ENCODE measurements at regions of chr12 and their contacts with region 1.

Region 1: DNA sequence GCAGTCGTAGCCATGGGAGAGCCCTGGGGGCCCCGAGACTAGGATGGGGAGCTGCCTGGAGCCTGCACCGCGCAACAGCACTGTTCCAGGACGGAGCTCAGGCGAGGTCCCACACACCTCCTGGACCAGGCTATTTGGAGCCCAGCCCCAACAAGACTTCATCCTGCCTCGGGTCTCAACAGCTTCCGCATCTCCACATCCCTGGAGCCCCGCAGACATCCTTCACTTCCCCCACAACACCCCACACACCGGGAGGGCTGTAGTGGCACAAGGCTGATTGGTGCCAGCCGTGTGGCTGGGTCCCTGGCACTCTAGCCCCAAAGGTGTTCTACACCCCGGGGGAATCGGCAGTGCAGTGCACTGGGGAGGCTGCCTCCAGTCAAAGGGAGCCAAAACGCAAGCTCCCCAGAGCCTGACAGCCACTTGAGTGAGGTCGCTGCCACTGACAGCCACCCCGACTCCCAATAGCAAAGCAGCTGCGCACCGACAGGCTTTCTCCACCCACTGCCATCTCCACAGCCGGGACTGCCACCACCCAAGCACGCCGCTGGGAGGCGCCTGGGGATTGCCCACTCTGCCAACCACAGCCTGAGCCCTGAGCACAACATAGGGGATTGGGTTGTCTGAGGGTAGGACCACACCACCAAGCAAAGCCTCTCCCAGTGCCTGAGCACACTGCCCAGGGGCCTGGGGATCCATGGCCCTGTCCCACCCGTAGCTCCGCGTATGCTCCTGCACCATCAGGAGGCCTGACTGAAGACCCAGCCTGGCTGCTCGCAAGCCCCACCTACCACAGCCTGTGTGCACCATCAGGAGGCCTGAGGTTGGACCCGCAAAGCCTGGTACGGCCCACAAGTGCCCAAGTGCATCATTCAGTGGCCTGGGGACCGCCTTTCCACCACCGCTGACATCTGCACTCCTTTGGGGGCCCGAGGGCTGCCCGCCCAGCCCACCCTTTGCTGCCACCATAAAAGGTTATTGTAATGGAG is 13.2 kb upstream of the KLRF1 start:
- DNase-seq: peak; percentile 95
- ATAC-seq: peak; percentile 98
- H3K4me3 Mint-ChIP-seq: peak overlapping the region; percentile 86
- H3K27ac Mint-ChIP-seq: peak overlapping the region; percentile 84
- H3K4me1 Mint-ChIP-seq: peaks cover 44% of the 10 kb centered on the region
- H3K27me3 Mint-ChIP-seq: peaks cover 4% of the 10 kb centered on the region

Region 2: GRCh38 chr12:9662500-9662899 is 151.6 kb before region 1 on chr12:
- CTCF ChIA-PET with region 1: no interaction called
- POLR2A ChIA-PET with region 1: no interaction called
- DNase-seq: peak; percentile 29
- ATAC-seq: peak; percentile 55
- H3K4me3 Mint-ChIP-seq: peak overlapping the region; percentile 7
- H3K27ac Mint-ChIP-seq: peak overlapping the region; percentile 82
- H3K4me1 Mint-ChIP-seq: peaks cover 85% of the 10 kb centered on the region
- H3K27me3 Mint-ChIP-seq: no peaks in the 10 kb centered on the region

Region 3: GRCh38 chr12:9760699-9761418 is 53.3 kb before region 1 on chr12 and contains the start of gene CD69:
- CTCF ChIA-PET with region 1: interaction called, 12 read pairs
- POLR2A ChIA-PET with region 1: interaction called, 14 read pairs
- DNase-seq: peak; percentile 92
- ATAC-seq: peak; percentile 60
- H3K4me3 Mint-ChIP-seq: peak within 1 kb of the TSS; percentile 92
- H3K27ac Mint-ChIP-seq: peak within 1 kb of the TSS; percentile 94
- H3K4me1 Mint-ChIP-seq: peaks cover 39% of the 10 kb centered on the region
- H3K27me3 Mint-ChIP-seq: no peaks in the 10 kb centered on the region
- total RNA-seq, gene CD69: 115 to 116 TPM

Region 4: DNA sequence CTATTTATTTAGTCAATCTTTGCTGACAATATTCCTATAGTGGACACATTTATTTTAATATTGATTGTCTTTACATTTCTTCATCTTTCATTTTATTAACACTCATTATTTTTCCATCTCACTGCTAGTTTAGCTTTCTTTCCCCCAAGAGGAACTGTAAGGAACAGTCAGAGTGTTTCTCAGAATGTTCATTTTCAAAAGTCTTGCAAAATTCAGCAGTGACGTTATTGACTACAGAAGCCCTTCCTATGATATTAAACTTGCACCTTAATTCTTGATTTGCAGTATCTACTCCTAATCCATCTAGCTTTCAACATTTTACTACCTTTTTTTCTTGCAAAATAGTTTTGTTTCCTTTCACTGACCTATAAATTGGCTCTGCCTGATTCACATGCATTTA is 42.0 kb after region 1 on chr12:
- CTCF ChIA-PET with region 1: interaction called, 11 read pairs
- POLR2A ChIA-PET with region 1: interaction called, 5 read pairs
- DNase-seq: no peak
- ATAC-seq: no peak
- H3K4me3 Mint-ChIP-seq: no peak overlapping the region
- H3K27ac Mint-ChIP-seq: no peak overlapping the region
- H3K4me1 Mint-ChIP-seq: peaks cover 32% of the 10 kb centered on the region
- H3K27me3 Mint-ChIP-seq: no peaks in the 10 kb centered on the region

Region 5: DNA sequence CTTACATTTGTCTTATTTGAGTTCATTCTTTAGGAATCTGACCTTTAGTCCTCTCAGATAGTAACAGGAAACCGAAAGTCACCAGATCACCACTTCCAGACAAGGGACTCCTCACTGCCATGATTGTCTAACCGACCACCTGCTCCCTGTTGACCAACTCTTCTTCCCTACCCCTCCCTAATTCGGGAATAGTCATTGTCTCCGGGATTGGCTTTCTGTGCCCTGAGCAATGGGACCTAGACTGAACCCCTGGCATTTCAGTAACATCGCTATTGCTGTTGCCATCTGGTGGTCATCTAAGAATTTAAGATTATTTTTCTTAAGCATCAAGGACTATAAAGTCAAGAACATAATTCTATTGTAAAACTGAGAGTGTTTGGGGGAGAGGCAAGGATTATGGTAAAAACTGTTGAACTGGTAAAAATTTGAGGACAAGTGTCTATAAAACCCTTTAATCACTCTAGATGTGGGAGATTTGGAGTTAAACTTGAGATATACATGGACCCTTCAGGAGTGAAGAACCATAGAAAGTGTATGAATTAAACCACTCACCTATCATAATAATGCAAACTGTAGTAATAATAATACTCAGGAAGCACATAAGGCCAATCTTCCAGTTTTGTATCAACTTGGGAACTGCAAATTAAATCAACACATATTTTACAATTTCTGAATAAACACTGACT is 111.7 kb after region 1 on chr12:
- CTCF ChIA-PET with region 1: interaction called, 41 read pairs
- POLR2A ChIA-PET with region 1: interaction called, 6 read pairs
- DNase-seq: peak; percentile 33
- ATAC-seq: peak; percentile 69
- H3K4me3 Mint-ChIP-seq: peak overlapping the region; percentile 60
- H3K27ac Mint-ChIP-seq: peak overlapping the region; percentile 77
- H3K4me1 Mint-ChIP-seq: peaks cover 37% of the 10 kb centered on the region
- H3K27me3 Mint-ChIP-seq: peaks cover 7% of the 10 kb centered on the region

Region 6: DNA sequence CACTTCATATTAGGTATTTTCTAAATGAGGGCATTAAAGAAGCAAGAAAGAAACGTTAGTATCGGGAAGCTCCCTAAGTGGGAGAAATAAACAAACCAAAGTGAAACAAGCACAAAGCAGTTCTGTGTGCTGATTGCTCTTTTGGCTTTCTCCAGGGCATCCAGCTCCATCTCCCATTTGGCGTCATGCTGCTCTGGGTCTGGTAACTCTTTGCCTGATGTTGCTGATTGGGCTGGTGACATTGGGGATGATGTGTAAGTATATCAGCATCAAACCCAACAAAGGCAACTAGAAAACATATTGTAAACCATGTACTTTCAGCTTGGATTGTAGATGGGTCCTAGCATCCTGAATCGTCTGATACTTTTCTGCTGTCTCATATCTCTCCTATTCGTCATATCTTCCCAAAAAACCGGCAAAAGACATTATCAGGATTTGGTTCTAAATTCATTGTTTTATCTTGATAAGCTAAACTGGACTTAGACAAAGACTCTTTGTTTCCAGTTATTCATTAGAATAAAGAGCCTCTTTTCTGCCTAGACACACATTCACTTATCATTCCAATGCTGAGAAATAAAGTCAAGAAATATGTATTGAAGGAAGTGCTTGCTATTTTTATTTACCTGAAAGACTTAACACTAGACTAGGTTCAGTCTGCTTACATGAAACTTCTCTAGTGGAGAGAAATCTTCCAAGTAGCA is 198.7 kb after region 1 on chr12:
- CTCF ChIA-PET with region 1: interaction called, 43 read pairs
- POLR2A ChIA-PET with region 1: interaction called, 3 read pairs
- DNase-seq: no peak
- ATAC-seq: no peak
- H3K4me3 Mint-ChIP-seq: no peak overlapping the region
- H3K27ac Mint-ChIP-seq: no peak overlapping the region
- H3K4me1 Mint-ChIP-seq: no peaks in the 10 kb centered on the region
- H3K27me3 Mint-ChIP-seq: peaks cover 36% of the 10 kb centered on the region

Measured in activated CD8-positive, alpha-beta T cell treated with anti-CD3 and anti-CD28 coated beads, Interleukin-2, amount 10 ng/mL, durations not matched to agents 7 days and 5 days (primary cell).